ENCODE measurements at regions of chr14 and their contacts with region 1.

Region 1: DNA sequence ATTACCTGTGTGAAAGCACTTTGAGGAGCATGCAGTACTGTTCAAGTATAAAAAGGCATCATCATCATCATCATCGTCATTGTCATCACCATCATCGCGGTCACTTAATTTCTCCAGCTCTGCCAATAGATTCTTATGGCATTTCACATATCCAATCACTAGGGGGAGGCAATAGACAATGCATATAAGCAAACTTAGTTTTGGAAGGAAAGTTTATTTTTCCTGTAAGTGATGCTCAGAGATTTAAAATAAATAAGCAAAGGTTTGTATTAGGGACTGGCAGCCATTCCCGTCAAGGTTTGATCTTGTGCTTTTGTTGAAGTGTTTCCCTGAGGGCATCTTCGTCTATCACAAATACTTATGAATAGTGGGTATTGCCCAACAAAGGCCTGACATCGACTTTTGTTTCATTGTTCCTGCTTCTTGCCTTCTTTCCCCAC is 127.4 kb downstream of the KTN1 start:
- DNase-seq: no peak
- ATAC-seq: peak; percentile 66

Region 2: DNA sequence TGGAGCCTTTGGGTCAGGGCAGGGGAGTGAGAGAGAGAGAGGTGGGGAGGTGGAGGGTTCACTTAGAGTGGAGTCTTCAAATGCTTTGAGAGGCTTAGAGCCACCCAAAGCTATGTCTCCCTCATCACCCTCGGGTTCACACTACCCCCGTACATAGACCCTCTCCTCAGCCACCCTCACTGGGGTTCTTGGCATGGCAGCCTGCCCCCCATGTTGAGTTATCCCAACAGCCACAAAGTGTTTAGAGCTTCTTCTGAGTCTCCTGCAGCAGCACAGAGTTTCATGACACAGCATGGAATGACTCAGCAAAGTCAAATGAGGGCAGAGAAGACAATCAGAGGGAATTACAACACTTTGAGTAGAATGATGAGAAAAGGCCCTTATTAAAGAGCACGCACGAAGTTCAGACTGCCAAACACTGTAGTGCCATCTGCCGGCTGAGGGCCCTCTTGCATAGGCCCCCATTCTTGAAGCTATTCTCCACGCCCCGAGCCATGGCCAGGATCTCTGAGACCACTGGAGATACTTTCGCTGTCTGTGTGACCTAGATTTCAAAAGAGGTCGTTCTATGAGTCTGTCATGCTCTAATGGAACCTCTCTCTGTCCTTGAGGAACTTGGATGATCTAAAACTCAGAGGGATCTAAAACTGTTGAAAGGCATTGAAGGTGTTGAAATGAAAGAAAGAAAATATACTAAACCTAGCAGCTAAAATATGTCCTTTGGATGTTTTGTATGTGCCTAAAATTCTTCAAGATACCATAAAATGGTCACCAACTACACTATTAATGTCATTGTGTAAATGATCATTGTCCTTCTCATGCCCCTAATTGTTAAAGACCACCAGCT is 632.7 kb after region 1 on chr14:
- intact Hi-C with region 1: loop called in 1 of 2 experiments (anchors 10 kb)
- DNase-seq: peak; percentile 48 to 78
- ATAC-seq: peak; percentile 91

Region 3: DNA sequence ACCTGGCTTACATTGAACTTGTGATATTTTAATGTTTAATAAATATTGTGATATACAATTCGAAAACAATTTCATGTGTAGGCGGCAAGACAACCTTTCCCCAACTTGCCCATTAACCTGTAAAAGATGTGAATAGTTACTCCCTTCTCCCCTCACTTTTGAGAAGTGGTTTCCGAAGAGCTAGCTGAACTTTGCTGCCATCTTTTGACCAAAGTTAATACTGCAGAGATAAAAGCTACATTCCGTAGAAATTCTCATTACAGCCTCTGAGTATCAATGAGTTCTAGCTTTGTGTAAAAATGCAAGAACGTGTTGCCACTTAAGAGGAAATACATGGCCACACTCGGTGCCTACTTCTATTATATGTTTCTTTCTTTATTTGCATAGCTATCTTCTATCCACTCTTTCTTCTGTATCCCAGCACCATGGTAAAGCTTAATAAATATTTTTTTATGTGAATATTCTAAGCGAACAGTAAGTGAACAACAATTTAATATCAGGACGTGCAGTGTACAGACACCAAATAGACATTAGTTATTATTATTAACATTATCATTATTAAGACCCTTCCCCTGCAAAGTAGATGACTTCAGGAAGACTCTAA is 767.1 kb after region 1 on chr14:
- intact Hi-C with region 1: loop called in 1 of 2 experiments (anchors 10 kb)
- DNase-seq: no peak
- ATAC-seq: peak; percentile 49